Activated CD4-positive, alpha-beta T cell treated with anti-CD3 and anti-CD28 coated beads, Interleukin-2, amount 10 ng/mL, durations not matched to agents 7 days and 5 days (primary cell): ENCODE measurements at regions of chr2 and their contacts with region 1.

Region 1: DNA sequence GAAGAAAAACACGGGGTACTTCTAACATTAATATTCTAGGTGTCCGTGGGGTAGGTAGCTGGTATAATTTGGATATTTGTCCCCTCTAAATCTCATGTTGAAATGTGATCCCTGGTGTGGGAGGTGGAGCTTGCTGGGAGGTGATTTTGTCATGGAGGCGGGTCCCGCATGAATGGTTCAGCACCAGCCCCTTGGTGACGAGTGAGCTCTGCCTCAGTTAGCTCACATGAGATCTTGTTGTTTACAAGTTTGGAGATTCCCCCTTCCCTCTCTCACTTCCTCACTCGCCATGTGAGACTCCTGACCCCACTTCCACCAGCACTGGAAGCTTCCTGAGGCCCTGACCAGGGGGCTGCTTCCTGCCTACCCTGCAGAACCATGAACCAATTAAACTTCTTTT is 35.4 kb upstream of the DNER start:
- DNase-seq: no peak
- H3K4me3 Mint-ChIP-seq: no peak overlapping the region
- H3K27ac Mint-ChIP-seq: no peak overlapping the region
- H3K4me1 Mint-ChIP-seq: peaks cover 4% of the 10 kb centered on the region
- H3K27me3 Mint-ChIP-seq: no peaks in the 10 kb centered on the region

Region 2: GRCh38 chr2:229947544-229947943 is 197.8 kb after region 1 on chr2:
- CTCF ChIA-PET with region 1: no interaction called
- POLR2A ChIA-PET with region 1: interaction called, 13 read pairs
- DNase-seq: no peak
- H3K4me3 Mint-ChIP-seq: no peak overlapping the region
- H3K27ac Mint-ChIP-seq: no peak overlapping the region
- H3K4me1 Mint-ChIP-seq: peaks cover 9% of the 10 kb centered on the region
- H3K27me3 Mint-ChIP-seq: no peaks in the 10 kb centered on the region